Activated CD4-positive, alpha-beta T cell treated with anti-CD3 and anti-CD28 coated beads for 36 hours (primary cell): ENCODE measurements at regions of chr9 and their contacts with region 1.

Region 1: DNA sequence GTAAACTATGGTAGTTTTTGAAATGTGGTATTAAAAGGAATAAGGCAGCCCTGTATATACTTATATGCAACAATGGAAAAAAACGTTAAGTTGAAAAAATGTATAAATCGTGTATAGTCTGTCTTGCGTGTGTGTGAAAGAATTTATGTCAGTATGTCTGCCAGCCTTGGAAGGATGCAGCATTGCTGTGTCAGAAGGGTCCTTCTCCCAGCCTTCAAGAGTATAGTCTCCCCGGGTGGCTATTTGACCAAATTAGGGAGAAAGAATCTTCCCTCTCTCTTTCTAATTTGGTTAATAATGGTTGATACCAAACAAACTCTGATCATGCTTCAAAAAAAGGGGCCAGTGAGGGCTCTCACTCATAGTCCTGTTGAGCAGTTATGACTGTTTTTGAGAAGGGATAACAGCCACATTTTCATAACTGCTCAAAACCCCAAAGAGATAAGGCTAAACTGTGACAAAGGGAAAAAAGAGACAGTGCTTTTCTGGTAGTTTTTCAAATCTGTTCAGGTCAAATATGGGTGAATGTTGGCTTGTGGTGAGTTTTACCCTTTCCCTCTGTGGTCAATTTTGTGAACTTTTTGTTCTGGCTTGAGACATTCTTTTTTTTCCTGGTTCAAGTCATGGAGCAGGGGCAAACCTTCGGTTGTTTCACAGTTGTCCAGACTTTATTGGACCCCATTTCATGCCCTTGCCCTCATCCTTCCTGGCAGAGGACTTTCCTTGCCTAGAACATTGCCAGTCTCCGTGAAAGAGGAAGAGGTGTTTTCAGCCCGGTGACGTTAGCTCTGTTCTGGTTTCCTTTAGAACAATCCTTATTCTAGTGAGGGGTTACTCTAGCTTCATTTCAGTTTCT is 21.0 kb downstream of the SNX30 start:
- DNase-seq: no peak
- ATAC-seq: peak; percentile 77
- H3K4me3 Mint-ChIP-seq: no peak overlapping the region
- H3K27ac Mint-ChIP-seq: peak overlapping the region; percentile 53
- H3K4me1 Mint-ChIP-seq: peaks cover 36% of the 10 kb centered on the region
- H3K27me3 Mint-ChIP-seq: no peaks in the 10 kb centered on the region

Region 2: DNA sequence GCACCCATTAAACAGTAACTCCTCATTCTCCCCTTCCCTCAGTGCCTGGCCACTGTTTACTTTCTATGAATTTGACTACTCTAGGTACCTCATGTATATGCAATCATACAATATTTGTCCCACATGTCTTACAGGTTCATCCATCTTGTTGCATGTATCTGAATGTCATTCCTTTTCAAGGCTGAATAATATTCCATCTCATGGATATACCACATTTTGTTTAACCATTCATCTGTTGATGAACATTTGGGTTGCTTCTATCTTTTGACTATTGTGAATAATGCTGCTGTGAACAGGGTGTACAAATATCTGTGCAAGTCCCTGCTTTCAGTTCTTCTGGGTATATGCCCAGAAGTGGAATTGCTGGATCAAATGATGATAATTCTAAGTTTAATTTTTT is 94.5 kb before region 1 on chr9:
- CTCF ChIA-PET with region 1: no interaction called
- POLR2A ChIA-PET with region 1: no interaction called
- intact Hi-C with region 1: no loop called
- DNase-seq: no peak
- ATAC-seq: no peak
- H3K4me3 Mint-ChIP-seq: no peak overlapping the region
- H3K27ac Mint-ChIP-seq: no peak overlapping the region
- H3K4me1 Mint-ChIP-seq: peaks cover 2% of the 10 kb centered on the region
- H3K27me3 Mint-ChIP-seq: peaks cover 2% of the 10 kb centered on the region

Region 3: GRCh38 chr9:112819635-112820496 is 48.3 kb after region 1 on chr9:
- CTCF ChIA-PET with region 1: interaction called, 3 read pairs
- POLR2A ChIA-PET with region 1: interaction called, 11 read pairs
- intact Hi-C with region 1: no loop called
- DNase-seq: peak; percentile 20
- ATAC-seq: peak; percentile 61
- H3K4me3 Mint-ChIP-seq: no peak overlapping the region
- H3K27ac Mint-ChIP-seq: no peak overlapping the region
- H3K4me1 Mint-ChIP-seq: no peaks in the 10 kb centered on the region
- H3K27me3 Mint-ChIP-seq: no peaks in the 10 kb centered on the region